PC-9 (cell line): ENCODE measurements at regions of chr12 and their contacts with region 1.

Region 1: GRCh38 chr12:318759-319515 is 56.3 kb upstream of the SLC6A13 start:
- DNase-seq: no peak
- H3K4me3 ChIP-seq: no peak overlapping the region
- H3K27ac ChIP-seq: no peak overlapping the region
- H3K4me1 ChIP-seq: no peaks in the 10 kb centered on the region
- H3K27me3 ChIP-seq: no peaks in the 10 kb centered on the region
- CTCF ChIP-seq: no peak

Region 2: DNA sequence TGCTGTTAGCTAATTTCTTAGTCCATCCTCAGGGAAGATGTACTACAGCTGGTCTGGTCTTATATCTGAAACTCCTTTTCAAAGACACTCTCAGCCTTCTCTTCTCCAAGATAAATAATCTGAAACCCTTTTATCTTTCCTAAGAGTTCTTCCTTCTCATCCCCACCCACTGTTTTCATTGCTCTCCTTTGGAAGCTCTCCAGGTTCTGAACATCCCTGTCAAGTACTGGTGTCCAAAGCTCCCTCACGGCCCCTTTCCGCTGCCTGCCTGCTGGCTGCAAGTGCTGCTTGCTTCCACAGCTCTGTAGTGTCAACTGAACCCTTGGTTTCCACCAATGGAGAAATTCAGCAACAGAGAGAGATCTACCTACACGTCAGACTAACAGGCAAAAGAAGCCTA is 49.7 kb before region 1 on chr12:
- CTCF ChIA-PET with region 1: no interaction called
- POLR2A ChIA-PET with region 1: interaction called, 28 read pairs
- intact Hi-C with region 1: no loop called
- DNase-seq: no peak
- H3K4me3 ChIP-seq: no peak overlapping the region
- H3K27ac ChIP-seq: no peak overlapping the region
- H3K4me1 ChIP-seq: no peaks in the 10 kb centered on the region
- H3K27me3 ChIP-seq: peaks cover 40% of the 10 kb centered on the region
- CTCF ChIP-seq: no peak

Region 3: GRCh38 chr12:304805-305204 is 14.1 kb before region 1 on chr12:
- CTCF ChIA-PET with region 1: no interaction called
- POLR2A ChIA-PET with region 1: no interaction called
- intact Hi-C with region 1: no loop called
- DNase-seq: no peak
- H3K4me3 ChIP-seq: no peak overlapping the region
- H3K27ac ChIP-seq: no peak overlapping the region
- H3K4me1 ChIP-seq: peaks cover 21% of the 10 kb centered on the region
- H3K27me3 ChIP-seq: no peaks in the 10 kb centered on the region
- CTCF ChIP-seq: no peak